ENCODE measurements at regions of chr1 and their contacts with region 1.

Region 1: DNA sequence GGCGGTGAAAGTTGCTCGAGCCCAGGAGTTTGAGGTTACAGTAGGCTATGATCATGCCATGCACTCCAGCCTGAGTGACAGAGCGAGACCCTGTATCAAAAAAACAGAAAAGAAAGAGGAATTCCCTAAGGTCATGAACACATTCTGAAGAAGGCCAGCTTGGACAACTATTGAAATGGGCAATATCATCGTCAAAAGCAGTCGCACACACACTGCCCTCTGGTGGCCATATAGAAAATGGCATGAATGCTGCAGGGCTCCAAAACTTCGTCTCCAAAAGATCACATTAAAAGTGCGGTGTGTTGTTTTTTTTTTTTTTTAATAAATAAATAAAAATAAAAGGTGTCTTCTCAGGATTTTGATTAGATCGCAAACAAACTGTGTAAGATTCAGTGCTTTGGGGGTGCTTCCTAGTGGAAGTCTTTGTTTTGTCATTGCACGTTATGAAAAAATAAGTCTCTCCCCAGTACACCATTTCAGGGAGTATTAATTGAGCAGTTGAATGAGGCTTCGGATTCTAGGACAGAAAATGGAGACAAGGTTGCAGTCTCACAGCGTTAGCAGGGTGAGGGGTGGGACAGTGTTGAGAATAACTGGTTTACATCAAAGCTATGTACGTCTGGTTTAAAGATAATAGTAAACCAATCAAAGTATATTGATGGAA is 87.5 kb upstream of the FMN2 start:
- DNase-seq: peak in 1 of 2 experiments; percentile 58
- H3K4me3 ChIP-seq: no peak overlapping the region
- H3K27ac ChIP-seq: no peak overlapping the region
- H3K4me1 ChIP-seq: no peaks in the 10 kb centered on the region
- H3K27me3 ChIP-seq: no peaks in the 10 kb centered on the region
- CTCF ChIP-seq: peak; percentile 57 to 75 (median 67)
- EP300 ChIP-seq: no peak
- POLR2A ChIP-seq: no peak
- RAD21 ChIP-seq: peak; percentile 27 to 37

Region 2: DNA sequence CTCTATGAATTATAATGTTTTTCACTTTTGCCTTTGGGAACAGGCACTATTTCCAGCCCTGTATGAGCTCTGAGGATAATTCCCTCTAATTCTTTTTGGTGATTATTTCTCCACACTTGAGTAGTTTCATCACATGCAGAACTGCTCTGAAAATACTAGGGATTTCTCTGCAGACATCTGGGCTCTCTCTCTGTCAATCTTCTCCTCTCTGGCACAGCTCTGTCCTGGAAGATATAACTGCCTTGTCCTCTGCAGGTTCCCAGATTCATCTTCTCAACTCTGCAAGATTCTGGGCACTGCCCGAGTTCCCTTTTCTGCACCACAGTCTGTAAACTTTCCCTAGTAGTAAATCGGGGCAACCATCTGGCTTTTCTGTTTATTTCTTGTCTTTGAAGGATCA is 43.9 kb before region 1 on chr1:
- CTCF ChIA-PET with region 1: interaction called, 19 read pairs
- POLR2A ChIA-PET with region 1: no interaction called
- DNase-seq: no peak
- H3K4me3 ChIP-seq: no peak overlapping the region
- H3K27ac ChIP-seq: no peak overlapping the region
- H3K4me1 ChIP-seq: no peaks in the 10 kb centered on the region
- H3K27me3 ChIP-seq: no peaks in the 10 kb centered on the region
- CTCF ChIP-seq: no peak
- EP300 ChIP-seq: no peak
- POLR2A ChIP-seq: no peak
- RAD21 ChIP-seq: no peak

Measured in H1 (cell line).